ENCODE measurements at regions of chr3 and their contacts with region 1.

Region 1: DNA sequence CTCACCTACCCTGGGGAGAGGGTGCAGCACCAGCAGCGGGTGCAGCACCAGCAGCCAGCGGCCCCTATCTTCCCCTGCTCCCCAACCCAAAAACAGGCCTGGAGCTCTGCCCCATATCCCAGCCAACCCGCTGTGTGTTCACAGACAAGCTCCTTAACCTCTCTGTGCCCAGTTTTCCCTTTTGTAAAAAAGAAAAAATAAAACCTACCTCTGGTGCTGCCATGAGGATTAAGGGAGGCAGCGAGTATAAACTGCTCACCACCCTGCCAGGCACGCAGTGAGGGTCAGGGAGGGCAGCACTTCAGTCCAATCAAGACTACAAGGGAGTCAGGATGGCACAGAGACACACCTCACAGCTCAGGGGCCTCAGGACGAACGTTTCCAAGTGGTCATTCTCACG is 163.3 kb downstream of the NUP210 start:
- DNase-seq: no peak
- H3K4me3 ChIP-seq: no peak overlapping the region
- H3K27ac ChIP-seq: no peak overlapping the region
- H3K4me1 ChIP-seq: no peaks in the 10 kb centered on the region
- H3K27me3 ChIP-seq: no peaks in the 10 kb centered on the region
- CTCF ChIP-seq: no peak
- EP300 ChIP-seq: no peak
- POLR2A ChIP-seq: no peak

Region 2: DNA sequence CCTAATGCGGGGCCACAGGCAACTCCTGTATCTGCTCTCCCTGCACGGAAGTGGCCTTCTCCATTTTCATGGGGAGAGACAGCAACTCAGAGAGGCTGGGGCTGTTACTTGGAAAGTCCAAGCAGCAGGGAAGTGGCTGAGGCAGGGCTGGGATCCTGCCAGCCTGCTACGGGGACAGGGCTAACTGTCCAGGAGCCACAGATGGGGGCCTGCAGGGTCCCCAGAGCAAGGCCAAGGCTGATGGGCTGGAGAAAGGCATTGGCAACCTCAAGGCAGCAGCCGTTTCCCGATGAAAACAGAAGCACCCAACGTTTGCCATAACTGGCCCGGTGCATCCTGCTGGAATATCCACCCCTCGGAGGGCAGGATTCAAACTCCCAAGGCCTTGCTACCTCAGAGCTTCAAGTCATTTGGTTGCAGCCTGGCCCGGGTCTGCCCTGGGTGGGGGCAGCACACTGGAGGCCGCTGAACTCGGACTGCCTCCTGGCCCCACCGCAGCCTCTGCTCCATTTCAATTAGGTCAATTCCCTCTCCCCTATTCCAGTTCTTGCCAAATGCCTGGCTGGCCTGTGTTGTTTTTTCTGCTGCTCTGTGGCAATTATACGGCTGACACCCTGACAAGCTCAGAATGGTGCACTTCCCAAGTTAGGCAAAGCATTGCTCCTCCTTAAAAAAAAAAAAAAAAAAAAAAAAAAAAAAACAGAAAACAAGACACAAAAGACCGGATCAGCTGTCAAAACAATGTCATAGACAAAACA is 19.8 kb after region 1 on chr3:
- intact Hi-C with region 1: loop called in 1 of 4 experiments (anchors 1 kb)
- DNase-seq: no peak
- H3K4me3 ChIP-seq: no peak overlapping the region
- H3K27ac ChIP-seq: no peak overlapping the region
- H3K4me1 ChIP-seq: no peaks in the 10 kb centered on the region
- H3K27me3 ChIP-seq: no peaks in the 10 kb centered on the region
- CTCF ChIP-seq: no peak
- EP300 ChIP-seq: no peak
- POLR2A ChIP-seq: no peak

Region 3: DNA sequence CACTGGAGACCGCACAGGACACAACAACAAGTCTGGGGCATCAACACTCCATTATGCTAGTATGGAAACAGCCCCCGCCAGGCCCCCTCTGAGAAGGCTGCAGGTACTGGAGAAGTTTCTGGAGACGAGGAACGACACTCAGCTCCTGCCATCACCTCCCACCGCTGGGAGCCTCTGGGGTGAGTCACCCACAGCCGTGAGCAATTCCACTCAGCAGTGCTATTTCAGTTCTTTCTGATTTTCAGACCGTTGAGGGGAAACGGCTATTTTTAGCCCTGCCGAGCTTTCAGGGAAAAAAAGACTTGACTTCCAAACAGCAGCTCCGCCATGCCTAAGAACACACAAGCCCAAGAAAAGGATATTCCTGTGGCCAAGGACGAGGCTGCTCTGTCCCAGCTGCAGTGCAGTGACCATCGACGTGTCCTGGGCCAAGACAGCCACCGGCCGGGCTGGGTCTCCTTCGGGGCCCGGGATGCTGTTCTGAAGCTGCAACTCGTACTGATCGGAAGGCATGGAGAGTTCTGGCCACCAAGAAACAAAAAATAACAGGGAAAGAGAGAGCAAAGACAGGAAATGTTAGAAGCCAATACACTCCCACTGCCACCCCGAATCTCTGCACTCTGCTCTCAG is 122.5 kb after region 1 on chr3:
- intact Hi-C with region 1: no loop called
- DNase-seq: peak in 1 of 5 donors; percentile 20
- H3K4me3 ChIP-seq: no peak overlapping the region
- H3K27ac ChIP-seq: no peak overlapping the region
- H3K4me1 ChIP-seq: no peaks in the 10 kb centered on the region
- H3K27me3 ChIP-seq: no peaks in the 10 kb centered on the region
- CTCF ChIP-seq: no peak
- EP300 ChIP-seq: no peak
- POLR2A ChIP-seq: no peak

Measured in ovary (tissue), 10 donors.